ENCODE measurements at regions of chr11 and their contacts with region 1.

Region 1: GRCh38 chr11:121194731-121195596 is 93.9 kb downstream of the TECTA start:
- DNase-seq: no peak
- ATAC-seq: peak; percentile 88

Region 2: GRCh38 chr11:120929664-120930154 is 265.3 kb before region 1 on chr11:
- intact Hi-C with region 1: loop called (anchors 10 kb)
- DNase-seq: no peak
- ATAC-seq: peak; percentile 79